Activated B cell treated with CpG ODN at 0.5 μM for 24 hours (primary cell): ENCODE measurements at regions of chr2 and their contacts with region 1.

Region 1: GRCh38 chr2:130824492-130825061 is 12.1 kb upstream of the ARHGEF4 start:
- DNase-seq: no peak
- ATAC-seq: peak; percentile 90
- H3K4me3 Mint-ChIP-seq: peak overlapping the region; percentile 55
- H3K27ac Mint-ChIP-seq: peak overlapping the region; percentile 86
- H3K4me1 Mint-ChIP-seq: peaks cover 23% of the 10 kb centered on the region
- H3K27me3 Mint-ChIP-seq: no peaks in the 10 kb centered on the region
- CTCF ChIP-seq: no peak

Region 2: DNA sequence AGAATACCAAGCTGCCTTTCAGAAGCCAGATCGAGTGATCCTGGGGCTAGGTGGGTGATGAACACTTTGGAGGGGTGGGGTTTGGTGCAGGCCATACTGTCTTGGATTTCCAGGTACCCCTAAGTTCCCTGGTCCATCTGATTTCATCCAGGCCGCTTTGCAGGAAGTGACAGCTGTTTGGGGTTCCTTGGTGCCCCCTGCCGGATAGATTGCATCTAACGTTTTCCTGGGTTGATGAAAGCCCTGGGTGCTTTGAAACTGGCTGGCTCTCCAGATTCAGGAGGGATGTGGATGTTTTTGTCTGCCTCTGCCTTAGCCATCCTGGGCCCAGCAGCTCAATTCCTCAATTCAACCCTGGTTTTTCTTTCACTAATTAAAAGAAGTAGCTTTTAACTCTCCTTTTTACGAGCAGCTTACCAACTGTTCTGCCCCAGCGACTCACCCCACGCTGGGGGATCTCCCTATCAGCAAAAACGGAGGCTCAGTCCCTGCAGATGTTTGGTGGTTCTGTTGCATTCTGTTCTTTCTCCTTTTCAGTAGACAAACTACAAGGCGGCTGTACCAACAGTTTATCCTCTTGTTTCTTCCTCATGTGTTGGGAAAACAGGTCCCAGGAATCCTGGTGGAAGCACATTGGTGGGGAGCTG is 49.2 kb after region 1 on chr2:
- CTCF ChIA-PET with region 1: interaction called, 4 read pairs
- POLR2A ChIA-PET with region 1: no interaction called
- intact Hi-C with region 1: loop called (anchors 1 kb)
- DNase-seq: peak; percentile 43
- ATAC-seq: peak; percentile 86
- H3K4me3 Mint-ChIP-seq: peak overlapping the region; percentile 21
- H3K27ac Mint-ChIP-seq: no peak overlapping the region
- H3K4me1 Mint-ChIP-seq: peaks cover 6% of the 10 kb centered on the region
- H3K27me3 Mint-ChIP-seq: peaks cover 4% of the 10 kb centered on the region
- CTCF ChIP-seq: no peak

Region 3: GRCh38 chr2:131093006-131093695 is 268.6 kb after region 1 on chr2 and contains the start of gene FAM168B:
- CTCF ChIA-PET with region 1: no interaction called
- POLR2A ChIA-PET with region 1: interaction called, 6 read pairs
- intact Hi-C with region 1: loop called (anchors 5 kb)
- DNase-seq: peak; percentile 96
- ATAC-seq: peak; percentile 78
- H3K4me3 Mint-ChIP-seq: peak within 1 kb of the TSS; percentile 97
- H3K27ac Mint-ChIP-seq: peak within 1 kb of the TSS; percentile 98
- H3K4me1 Mint-ChIP-seq: peaks cover 22% of the 10 kb centered on the region
- H3K27me3 Mint-ChIP-seq: no peaks in the 10 kb centered on the region
- CTCF ChIP-seq: no peak
- total RNA-seq, gene FAM168B: 59.9 and 62.5 TPM in 2 replicates

Region 4: DNA sequence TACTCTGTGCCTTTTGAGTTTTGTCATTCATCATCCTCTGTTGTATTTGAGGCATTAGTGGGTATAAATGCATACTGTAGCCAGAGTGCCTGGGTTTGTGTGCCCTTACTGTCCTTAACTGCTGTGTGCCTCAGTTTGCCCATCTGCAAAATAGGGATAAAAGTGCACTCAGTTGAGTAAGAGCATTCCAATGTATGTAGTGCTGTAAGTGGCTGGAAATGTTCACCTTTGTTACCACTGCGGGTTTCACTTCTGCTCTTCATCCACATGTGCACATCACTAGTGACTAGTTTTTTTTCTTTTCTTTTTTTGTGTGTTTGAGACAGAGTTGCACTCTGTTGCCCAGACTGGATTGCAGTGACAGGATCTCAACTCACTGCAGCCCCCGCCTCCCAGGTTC is 320.5 kb after region 1 on chr2:
- CTCF ChIA-PET with region 1: no interaction called
- POLR2A ChIA-PET with region 1: no interaction called
- intact Hi-C with region 1: no loop called
- DNase-seq: no peak
- ATAC-seq: peak; percentile 25
- H3K4me3 Mint-ChIP-seq: no peak overlapping the region
- H3K27ac Mint-ChIP-seq: no peak overlapping the region
- H3K4me1 Mint-ChIP-seq: peaks cover 8% of the 10 kb centered on the region
- H3K27me3 Mint-ChIP-seq: no peaks in the 10 kb centered on the region
- CTCF ChIP-seq: no peak

Region 5: GRCh38 chr2:131201098-131201497 is 376.5 kb after region 1 on chr2:
- CTCF ChIA-PET with region 1: no interaction called
- POLR2A ChIA-PET with region 1: no interaction called
- intact Hi-C with region 1: no loop called
- DNase-seq: no peak
- ATAC-seq: no peak
- H3K4me3 Mint-ChIP-seq: no peak overlapping the region
- H3K27ac Mint-ChIP-seq: no peak overlapping the region
- H3K4me1 Mint-ChIP-seq: no peaks in the 10 kb centered on the region
- H3K27me3 Mint-ChIP-seq: peaks cover 2% of the 10 kb centered on the region
- CTCF ChIP-seq: no peak